ENCODE measurements at regions of chr3 and their contacts with region 1.

Region 1: DNA sequence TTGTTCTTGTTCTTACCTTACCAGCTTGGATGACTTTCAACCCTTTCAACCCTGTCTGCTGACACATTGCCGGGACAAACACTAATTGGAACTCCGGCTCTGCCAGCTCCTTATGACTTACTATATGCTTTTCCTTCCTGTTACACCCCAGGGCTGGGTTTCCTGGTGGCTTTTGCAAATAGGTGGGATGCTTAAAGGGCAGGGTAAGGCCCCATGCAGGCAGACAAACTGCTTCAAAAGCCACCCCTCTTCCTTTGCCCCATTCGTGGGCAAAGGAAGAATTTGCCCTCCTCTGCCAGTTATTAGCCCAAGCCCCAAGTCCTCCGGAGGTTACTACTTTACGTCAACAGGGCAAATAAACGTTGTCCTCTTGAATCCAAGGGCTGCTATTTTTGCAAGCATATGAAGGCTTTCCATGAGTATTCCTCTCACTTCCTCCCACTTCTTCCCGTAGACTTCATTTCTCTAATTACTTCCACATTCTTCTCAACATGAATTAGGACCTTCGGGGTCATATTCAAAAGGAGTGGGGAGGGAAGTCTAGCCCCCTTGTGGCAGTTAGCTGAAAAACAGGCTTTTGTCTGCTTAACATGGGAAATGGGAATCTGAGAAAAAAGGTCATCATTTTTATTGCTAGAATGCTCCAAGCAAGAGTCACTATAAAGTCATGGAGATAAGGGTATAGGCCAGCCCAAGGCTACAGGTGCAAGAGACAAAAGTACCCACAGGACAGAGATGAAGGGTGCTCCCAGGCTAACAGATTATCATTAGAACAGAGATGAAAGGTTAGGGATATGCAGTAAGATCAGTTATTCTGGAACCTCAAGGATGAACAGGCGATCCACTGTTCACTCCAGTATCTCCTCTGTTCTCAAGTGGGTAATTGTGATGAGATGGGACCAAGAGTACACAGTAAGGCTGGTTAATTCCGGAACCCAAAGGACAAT is 56.3 kb upstream of the FSTL1 start:
- DNase-seq: peak; percentile 75
- H3K4me3 ChIP-seq: no peak overlapping the region
- H3K27ac ChIP-seq: no peak overlapping the region
- H3K4me1 ChIP-seq: no peaks in the 10 kb centered on the region
- H3K27me3 ChIP-seq: no peaks in the 10 kb centered on the region
- CTCF ChIP-seq: peak; percentile 83

Region 2: GRCh38 chr3:120239644-120240043 is 267.5 kb before region 1 on chr3:
- CTCF ChIA-PET with region 1: no interaction called
- POLR2A ChIA-PET with region 1: no interaction called
- intact Hi-C with region 1: loop called (anchors 5 kb)
- DNase-seq: no peak
- H3K4me3 ChIP-seq: no peak overlapping the region
- H3K27ac ChIP-seq: no peak overlapping the region
- H3K4me1 ChIP-seq: no peaks in the 10 kb centered on the region
- H3K27me3 ChIP-seq: no peaks in the 10 kb centered on the region
- CTCF ChIP-seq: no peak

Region 3: GRCh38 chr3:120567370-120568201 is 60.5 kb after region 1 on chr3:
- CTCF ChIA-PET with region 1: interaction called, 11 read pairs
- POLR2A ChIA-PET with region 1: no interaction called
- intact Hi-C with region 1: no loop called
- DNase-seq: peak; percentile 51
- H3K4me3 ChIP-seq: peak overlapping the region; percentile 16
- H3K27ac ChIP-seq: no peak overlapping the region
- H3K4me1 ChIP-seq: no peaks in the 10 kb centered on the region
- H3K27me3 ChIP-seq: no peaks in the 10 kb centered on the region
- CTCF ChIP-seq: peak; percentile 60

Measured in A673 (cell line).